ENCODE measurements at regions of chr15 and their contacts with region 1.

Region 1: GRCh38 chr15:63473999-63474809 is 30.2 kb upstream of the USP3 start:
- DNase-seq: peak; percentile 84
- ATAC-seq: peak; percentile 79
- H3K4me3 Mint-ChIP-seq: peak overlapping the region; percentile 9
- H3K27ac Mint-ChIP-seq: peak overlapping the region; percentile 94
- H3K4me1 Mint-ChIP-seq: peaks cover 59% of the 10 kb centered on the region
- H3K27me3 Mint-ChIP-seq: no peaks in the 10 kb centered on the region

Region 2: DNA sequence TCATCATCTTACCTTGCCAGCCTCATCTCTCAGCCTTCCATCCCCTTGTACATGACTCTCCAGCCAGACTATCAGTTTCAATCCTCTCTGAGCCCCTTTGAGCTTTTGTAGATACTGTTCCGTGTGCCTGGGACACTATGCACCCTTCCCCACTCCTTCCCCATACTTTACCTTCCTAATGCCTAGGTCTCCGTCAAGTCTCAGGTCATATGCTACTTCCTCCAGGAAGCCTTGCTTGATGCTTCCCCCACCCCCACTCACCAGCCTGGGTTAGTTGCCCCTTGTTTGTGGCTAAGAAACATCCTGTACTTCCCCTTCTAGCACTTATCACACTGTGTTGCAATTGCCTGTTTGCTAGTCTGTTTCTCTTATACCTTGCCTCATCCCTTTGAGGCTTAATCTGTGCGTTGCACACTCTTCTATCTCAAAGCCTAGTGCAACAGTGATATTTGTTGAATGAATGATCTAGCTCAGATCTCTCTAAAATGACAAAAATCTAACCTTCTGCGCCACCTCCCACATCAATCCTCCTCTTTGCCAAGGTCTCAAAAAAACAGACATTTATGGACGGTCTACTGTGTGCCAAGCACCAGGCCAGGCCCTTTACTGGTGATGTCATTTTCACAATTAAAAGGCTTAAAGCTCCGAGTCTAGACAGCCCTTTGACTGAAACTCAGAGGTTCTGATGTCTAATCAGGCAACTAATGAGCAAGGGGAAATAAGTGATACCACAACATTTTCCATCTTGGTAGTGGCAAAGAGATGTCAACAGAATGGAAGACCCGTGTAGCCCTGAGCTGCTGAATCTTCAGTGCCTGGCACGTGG is 23.7 kb after region 1 on chr15:
- CTCF ChIA-PET with region 1: interaction called, 78 read pairs
- POLR2A ChIA-PET with region 1: interaction called, 9 read pairs
- intact Hi-C with region 1: loop called (anchors 1 to 2 kb)
- DNase-seq: peak; percentile 71
- ATAC-seq: peak; percentile 56
- H3K4me3 Mint-ChIP-seq: no peak overlapping the region
- H3K27ac Mint-ChIP-seq: no peak overlapping the region
- H3K4me1 Mint-ChIP-seq: peaks cover 74% of the 10 kb centered on the region
- H3K27me3 Mint-ChIP-seq: no peaks in the 10 kb centered on the region

Region 3: GRCh38 chr15:63560741-63561448 is 86.7 kb after region 1 on chr15:
- CTCF ChIA-PET with region 1: interaction called, 3 read pairs
- POLR2A ChIA-PET with region 1: no interaction called
- intact Hi-C with region 1: loop called (anchors 1 to 2 kb)
- DNase-seq: peak; percentile 81
- ATAC-seq: peak; percentile 95
- H3K4me3 Mint-ChIP-seq: no peak overlapping the region
- H3K27ac Mint-ChIP-seq: peak overlapping the region; percentile 74
- H3K4me1 Mint-ChIP-seq: peaks cover 49% of the 10 kb centered on the region
- H3K27me3 Mint-ChIP-seq: no peaks in the 10 kb centered on the region

Measured in activated CD4-positive, alpha-beta T cell treated with anti-CD3 and anti-CD28 coated beads for 36 hours (primary cell).